HEK293 (cell line): ENCODE measurements at regions of chr7 and their contacts with region 1.

Region 1: GRCh38 chr7:133196856-133197612 is 55.8 kb upstream of the EXOC4 start:
- H3K4me3 ChIP-seq: no peak overlapping the region
- H3K27ac ChIP-seq: no peak overlapping the region
- H3K4me1 ChIP-seq: no peaks in the 10 kb centered on the region
- CTCF ChIP-seq: no peak

Region 2: DNA sequence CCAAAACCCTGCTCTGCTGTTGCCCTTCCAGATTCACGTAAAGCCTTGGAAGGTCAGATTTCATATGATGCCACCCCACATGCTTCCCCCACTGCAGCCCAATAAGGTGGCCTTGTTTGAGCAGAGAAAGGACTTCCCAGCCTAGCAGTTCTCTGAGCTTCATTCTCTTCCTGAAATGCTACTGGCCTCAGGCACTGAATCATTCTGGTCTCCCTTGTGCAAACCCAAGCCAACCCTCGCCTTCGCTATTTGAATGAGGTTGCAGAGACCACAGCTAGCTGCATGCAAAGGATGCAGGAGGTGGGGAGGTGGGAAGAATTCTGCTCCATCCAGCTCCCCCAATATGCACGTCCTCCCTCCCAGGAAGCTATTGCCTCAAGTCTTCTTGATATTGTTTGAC is 560.4 kb before region 1 on chr7:
- CTCF ChIA-PET with region 1: interaction called, 11 read pairs
- POLR2A ChIA-PET with region 1: no interaction called
- H3K4me3 ChIP-seq: no peak overlapping the region
- H3K27ac ChIP-seq: no peak overlapping the region
- H3K4me1 ChIP-seq: no peaks in the 10 kb centered on the region
- CTCF ChIP-seq: no peak

Region 3: DNA sequence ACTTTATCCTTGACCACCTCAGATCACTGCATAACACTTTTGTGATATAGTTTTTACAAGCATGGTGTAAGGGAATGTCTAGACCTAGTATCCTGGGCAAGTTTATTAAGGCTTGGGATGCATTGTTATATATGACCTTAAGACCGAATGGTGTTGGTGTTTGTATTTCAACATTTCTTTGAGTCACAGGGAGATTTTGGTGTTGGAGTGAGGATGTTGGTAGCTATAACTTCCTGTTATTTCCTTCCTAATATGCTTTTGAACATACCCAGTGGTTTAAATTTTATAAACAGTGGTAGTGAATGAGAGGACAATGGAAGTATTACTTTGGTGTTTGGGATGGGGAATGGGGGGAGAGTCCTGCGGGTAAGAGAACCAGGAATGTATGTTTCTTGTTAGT is 58.5 kb after region 1 on chr7:
- CTCF ChIA-PET with region 1: no interaction called
- POLR2A ChIA-PET with region 1: no interaction called
- H3K4me3 ChIP-seq: no peak overlapping the region
- H3K27ac ChIP-seq: no peak overlapping the region
- H3K4me1 ChIP-seq: 0 out of 2 replicates have a peak, but pooled peaks cover 3% of the 10 kb centered on the region
- CTCF ChIP-seq: no peak

Region 4: DNA sequence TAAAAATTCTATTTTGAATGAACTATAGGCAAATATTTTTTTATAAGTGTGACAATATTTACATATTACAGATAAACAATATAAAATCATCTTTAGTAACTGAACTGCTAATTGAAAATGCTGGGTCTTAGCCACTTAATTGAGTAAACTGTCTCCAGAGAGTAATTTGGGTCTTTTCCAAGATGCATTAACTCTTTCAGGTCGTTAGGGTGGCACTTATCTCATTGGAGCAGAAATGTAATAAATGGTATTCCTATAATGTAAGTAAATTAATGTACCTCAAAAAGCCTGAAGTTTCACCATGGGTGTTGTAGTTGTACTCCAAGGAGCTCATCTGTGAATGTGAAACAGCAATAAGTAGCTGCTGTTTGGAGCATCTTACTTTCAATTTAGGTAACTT is 264.4 kb after region 1 on chr7:
- CTCF ChIA-PET with region 1: no interaction called
- POLR2A ChIA-PET with region 1: no interaction called
- H3K4me3 ChIP-seq: no peak overlapping the region
- H3K27ac ChIP-seq: no peak overlapping the region
- H3K4me1 ChIP-seq: no peaks in the 10 kb centered on the region
- CTCF ChIP-seq: no peak